Tibial artery (tissue), 4 donors: ENCODE measurements at regions of chr17 and their contacts with region 1.

Region 1: DNA sequence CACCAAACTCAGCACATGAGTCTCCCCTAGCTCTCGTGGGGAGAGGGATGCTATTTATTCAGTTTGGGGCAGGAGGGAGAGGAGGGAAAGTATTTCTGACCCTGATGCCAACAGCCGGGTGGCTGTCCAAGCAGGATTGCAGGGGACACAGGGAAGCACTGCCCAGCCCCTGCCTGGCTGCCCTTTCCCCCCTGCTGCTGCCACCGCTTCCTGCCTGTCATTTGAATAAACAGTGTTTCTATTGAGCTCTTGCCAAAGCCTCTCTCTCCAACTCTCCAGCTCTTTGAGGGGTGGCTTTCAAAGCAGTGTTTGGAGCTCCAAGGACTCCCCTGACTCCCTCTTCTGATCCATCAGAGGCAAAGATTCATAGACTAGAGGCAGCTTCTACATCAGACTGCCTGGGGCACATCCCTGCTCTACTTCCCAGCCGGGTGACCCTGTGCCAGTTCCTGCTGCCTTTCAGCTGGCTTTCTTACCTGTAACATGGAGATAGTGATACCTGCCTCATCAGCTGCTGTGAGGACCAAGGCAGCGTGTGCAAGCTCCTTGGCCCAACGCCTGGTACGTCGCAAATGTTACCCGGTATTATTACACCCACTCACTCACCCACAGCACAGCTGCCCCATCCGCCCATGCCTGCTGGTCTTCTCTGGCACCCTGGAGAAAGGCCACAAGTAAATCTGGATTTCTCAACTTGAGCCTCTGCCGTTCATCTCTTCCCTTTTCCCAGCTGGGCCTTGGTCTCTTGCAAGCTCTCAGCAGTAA is 9.5 kb downstream of the PROCA1 start:
- DNase-seq: no peak
- H3K4me3 ChIP-seq: no peak overlapping the region
- H3K27ac ChIP-seq: no peak overlapping the region
- H3K4me1 ChIP-seq: no peaks in the 10 kb centered on the region
- H3K27me3 ChIP-seq: no peaks in the 10 kb centered on the region
- CTCF ChIP-seq: no peak

Region 2: DNA sequence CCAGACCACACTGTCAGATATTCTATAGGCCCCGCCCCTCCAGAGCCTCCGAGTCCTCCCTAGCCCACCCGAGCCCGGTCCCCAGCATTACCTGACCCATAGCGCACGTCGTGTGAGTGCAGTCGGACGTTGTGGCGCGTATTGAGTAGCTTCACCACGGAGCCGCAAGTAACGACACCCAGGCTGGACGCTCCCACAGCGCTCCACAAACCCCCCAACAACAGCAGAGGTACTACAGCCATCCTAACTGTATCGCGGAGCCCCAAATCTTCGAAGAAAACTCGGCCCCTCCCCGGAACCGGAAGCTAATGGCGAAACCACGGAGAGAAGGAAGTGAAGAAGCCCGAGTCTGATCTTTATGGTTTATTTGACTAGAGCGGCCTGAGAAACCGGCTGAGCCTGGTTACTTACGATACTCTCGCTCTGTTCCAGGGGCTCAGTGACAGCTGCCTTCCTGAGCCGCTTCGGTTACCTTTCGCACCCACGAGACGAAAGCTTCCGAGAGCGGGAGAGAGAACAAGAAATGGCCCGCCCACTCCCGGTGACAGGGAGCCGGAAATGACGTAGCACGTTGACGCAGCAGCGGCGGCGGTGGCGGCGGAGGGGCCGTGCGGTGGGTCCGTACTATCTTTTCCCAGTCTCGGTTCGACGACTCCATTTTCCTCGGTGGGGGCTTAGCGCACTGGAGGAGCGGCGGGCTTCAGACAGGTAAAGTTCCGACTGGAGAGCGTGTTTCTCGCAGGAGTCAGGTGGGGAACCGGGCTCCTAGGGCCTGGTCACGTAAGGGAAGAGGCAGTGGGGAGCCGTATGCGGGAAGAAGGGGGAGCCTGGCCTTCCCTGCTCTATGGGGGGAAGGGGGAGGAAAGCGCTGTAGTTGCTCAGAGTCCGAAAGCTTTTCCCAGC is 40.3 kb before region 1 on chr17 and contains the starts of genes SDF2 and SUPT6H:
- intact Hi-C with region 1: loop called (anchors 5 kb)
- DNase-seq: peak; percentile 88 to 93
- H3K4me3 ChIP-seq: peak within 1 kb of the TSS; percentile 79 to 84
- H3K27ac ChIP-seq: peak within 1 kb of the TSS; percentile 94 to 96
- H3K4me1 ChIP-seq: peaks cover 0 to 52% (median 28%) of the 10 kb centered on the region in 4 donors
- H3K27me3 ChIP-seq: no peaks in the 10 kb centered on the region
- CTCF ChIP-seq: peak in 1 of 2 experiments; percentile 9